HEK293 (cell line): ENCODE measurements at regions of chr17 and their contacts with region 1.

Region 1: GRCh38 chr17:31433091-31433790 is 41.8 kb downstream of the RAB11FIP4 start:
- H3K4me3 ChIP-seq: no peak overlapping the region
- H3K27ac ChIP-seq: no peak overlapping the region
- H3K4me1 ChIP-seq: no peaks in the 10 kb centered on the region
- CTCF ChIP-seq: no peak

Region 2: GRCh38 chr17:31448467-31449077 is 15.3 kb after region 1 on chr17:
- CTCF ChIA-PET with region 1: interaction called, 23 read pairs
- POLR2A ChIA-PET with region 1: no interaction called
- H3K4me3 ChIP-seq: no peak overlapping the region
- H3K27ac ChIP-seq: no peak overlapping the region
- H3K4me1 ChIP-seq: no peaks in the 10 kb centered on the region
- CTCF ChIP-seq: no peak

Region 3: GRCh38 chr17:31509095-31509804 is 76.0 kb after region 1 on chr17:
- CTCF ChIA-PET with region 1: interaction called, 11 read pairs
- POLR2A ChIA-PET with region 1: interaction called, 5 read pairs
- H3K4me3 ChIP-seq: no peak overlapping the region
- H3K27ac ChIP-seq: no peak overlapping the region
- H3K4me1 ChIP-seq: no peaks in the 10 kb centered on the region; the same call in 1 of the 2 replicates
- CTCF ChIP-seq: no peak

Region 4: GRCh38 chr17:31517524-31517923 is 84.3 kb after region 1 on chr17:
- CTCF ChIA-PET with region 1: interaction called, 111 read pairs
- POLR2A ChIA-PET with region 1: no interaction called
- H3K4me3 ChIP-seq: no peak overlapping the region
- H3K27ac ChIP-seq: no peak overlapping the region
- H3K4me1 ChIP-seq: peaks cover 2% of the 10 kb centered on the region; the same call in 1 of the 2 replicates
- CTCF ChIP-seq: no peak

Region 5: GRCh38 chr17:31524926-31525800 is 91.9 kb after region 1 on chr17:
- CTCF ChIA-PET with region 1: interaction called, 111 read pairs
- POLR2A ChIA-PET with region 1: no interaction called
- H3K4me3 ChIP-seq: no peak overlapping the region
- H3K27ac ChIP-seq: no peak overlapping the region
- H3K4me1 ChIP-seq: no peaks in the 10 kb centered on the region; the same call in 1 of the 2 replicates
- CTCF ChIP-seq: peak; percentile 80

Region 6: DNA sequence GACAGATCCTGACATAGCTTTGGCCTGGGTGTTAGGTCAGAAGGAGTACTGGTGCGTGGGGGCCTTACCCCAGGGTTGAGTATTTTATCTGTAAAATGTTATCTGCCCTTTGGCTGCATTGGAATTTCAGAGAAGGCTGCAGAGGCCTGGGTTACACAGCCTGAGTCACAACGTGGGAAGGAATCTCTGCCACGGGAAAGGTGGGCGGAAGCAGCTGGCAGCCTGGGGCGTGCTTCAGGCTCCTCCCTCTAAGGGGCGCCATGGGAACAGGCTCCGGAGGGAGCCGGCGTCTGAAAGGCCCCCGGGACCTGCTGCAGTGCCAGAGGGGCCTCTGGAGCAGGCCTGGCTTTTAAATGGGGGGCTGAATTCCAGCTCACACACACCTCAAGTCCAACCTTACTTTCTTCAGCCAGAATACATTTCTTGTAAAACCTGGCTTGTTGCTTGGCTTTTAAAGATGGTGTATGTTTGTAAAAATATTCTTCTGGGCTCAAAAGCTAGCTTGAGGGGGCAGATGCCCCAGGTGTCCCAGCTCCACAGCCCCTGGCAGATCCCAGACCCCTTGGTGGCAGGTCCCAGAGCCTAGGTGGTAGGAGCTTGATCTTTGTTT is 100.4 kb after region 1 on chr17:
- CTCF ChIA-PET with region 1: interaction called, 111 read pairs
- POLR2A ChIA-PET with region 1: no interaction called
- H3K4me3 ChIP-seq: no peak overlapping the region
- H3K27ac ChIP-seq: no peak overlapping the region
- H3K4me1 ChIP-seq: peaks cover 15% of the 10 kb centered on the region
- CTCF ChIP-seq: 0 out of 2 replicates have a peak, but pooled peaks have one; percentile 54